RWPE1 (cell line): ENCODE measurements at regions of chr13 and their contacts with region 1.

Region 1: GRCh38 chr13:39016787-39017186 is 21.1 kb downstream of the PROSER1 start:
- DNase-seq: peak; percentile 33
- H3K27ac ChIP-seq: no peak overlapping the region
- CTCF ChIP-seq: peak; percentile 56

Region 2: GRCh38 chr13:38970380-38971051 is 46.3 kb before region 1 on chr13:
- CTCF ChIA-PET with region 1: interaction called, 10 read pairs
- POLR2A ChIA-PET with region 1: no interaction called
- DNase-seq: no peak
- H3K27ac ChIP-seq: no peak overlapping the region
- CTCF ChIP-seq: 0 out of 2 replicates have a peak, but pooled peaks have one; percentile 6